Left cardiac atrium (tissue), 4 donors: ENCODE measurements at regions of chr20 and their contacts with region 1.

Region 1: DNA sequence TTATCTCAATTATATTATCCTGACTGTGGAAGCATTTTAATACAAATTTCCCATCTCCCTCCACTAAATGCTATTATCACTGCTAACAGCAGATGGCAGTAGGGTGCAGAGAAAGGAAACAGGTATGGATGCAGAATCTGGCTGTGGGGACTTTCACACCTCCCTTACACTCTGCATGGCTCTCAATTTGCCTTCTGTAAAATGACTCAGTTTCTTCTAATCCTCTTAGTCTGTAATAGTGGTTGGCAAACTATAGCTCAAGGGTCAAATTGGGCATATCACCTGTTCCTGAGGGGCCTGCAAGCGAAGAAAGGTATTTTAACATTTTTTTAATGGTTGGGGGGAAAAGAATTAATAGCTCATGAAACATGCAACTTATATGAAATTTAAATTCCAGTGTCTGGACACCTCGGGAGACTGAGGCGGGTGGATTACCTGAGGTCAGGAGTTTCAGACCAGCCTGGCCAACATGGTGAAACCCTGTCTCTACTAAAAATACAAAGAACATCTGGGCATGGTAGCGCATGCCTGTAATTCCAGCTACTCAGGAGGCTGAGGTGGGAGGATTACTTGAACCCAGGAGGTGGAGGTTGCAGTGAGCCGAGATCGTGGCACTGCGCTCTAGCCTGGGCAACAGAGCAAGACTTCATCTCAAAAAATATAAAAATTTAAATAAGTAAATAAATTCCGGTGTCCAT is 83.5 kb downstream of the ZMYND8 start:
- DNase-seq: no peak
- ATAC-seq: peak; percentile 51 to 76

Region 2: GRCh38 chr20:47312020-47312662 is 39.1 kb after region 1 on chr20:
- intact Hi-C with region 1: loop called in 1 of 2 experiments (anchors 5 kb)
- DNase-seq: no peak
- ATAC-seq: no peak

Region 3: DNA sequence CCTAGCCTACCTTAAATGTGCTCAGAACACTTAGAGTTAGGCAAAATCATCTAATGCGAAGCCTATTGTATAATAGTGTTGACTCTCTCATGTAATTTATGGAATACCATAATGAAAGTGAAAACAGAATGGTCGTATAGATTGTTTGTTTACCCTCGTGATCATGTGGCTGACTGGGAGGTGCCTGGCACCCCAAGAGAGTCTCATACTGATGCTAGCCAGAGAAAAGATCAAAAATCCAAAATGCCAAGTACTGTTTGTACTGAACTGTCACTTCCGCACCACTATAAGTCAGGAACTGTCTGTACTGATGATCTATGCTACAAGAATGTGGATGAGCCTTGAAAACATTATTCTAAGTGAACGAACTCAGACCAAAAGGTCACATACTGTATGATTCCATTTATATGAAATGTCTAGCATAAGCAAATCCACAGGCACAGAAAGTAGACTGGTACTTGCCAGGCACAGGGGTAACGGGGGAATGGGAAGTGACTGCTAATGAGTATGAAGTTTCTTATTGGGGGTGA is 61.0 kb after region 1 on chr20:
- intact Hi-C with region 1: no loop called
- DNase-seq: no peak
- ATAC-seq: peak; percentile 56 to 75

Region 4: GRCh38 chr20:47379433-47380150 is 106.5 kb after region 1 on chr20:
- intact Hi-C with region 1: loop called (anchors 1 to 2 kb)
- DNase-seq: no peak
- ATAC-seq: peak in 1 of 2 donors; percentile 69

Region 5: DNA sequence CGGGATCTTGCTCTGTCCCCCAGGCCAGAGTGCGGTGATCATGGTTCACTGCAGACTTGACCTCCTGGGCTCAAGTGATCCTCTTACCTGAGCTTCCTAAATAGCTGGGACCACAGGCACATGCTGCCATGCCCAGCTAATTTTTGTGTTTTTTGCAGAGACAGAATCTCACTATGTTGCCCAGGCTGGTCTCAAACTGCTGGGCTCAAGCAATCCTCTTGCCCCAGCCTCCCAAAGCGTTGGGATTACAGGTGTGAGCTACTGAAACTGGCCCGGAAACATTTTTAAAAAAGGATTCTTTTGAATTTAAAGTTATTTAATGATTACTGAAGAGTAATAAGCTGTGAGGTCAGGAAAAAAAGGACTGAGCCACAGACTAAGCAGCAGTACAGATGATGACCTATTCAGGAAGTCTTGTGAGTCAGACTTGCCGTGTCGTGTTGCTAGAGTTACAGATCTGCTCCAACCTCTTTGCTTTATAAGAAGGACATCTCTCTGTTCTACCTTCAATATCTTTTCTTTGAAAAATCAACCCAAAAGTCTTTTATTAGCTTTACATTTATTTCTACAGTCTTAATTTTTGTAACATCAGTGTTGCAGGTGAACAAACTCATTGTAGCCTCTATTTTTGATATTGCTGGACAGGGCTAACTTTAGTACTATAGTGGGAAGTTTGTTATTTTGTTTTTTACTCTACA is 337.4 kb after region 1 on chr20:
- intact Hi-C with region 1: loop called in 1 of 2 experiments (anchors 10 kb)
- DNase-seq: peak; percentile 79
- ATAC-seq: peak in 1 of 2 donors; percentile 89